CD4-positive, alpha-beta memory T cell (primary cell): ENCODE measurements at regions of chr16 and their contacts with region 1.

Region 1: GRCh38 chr16:3074860-3075522 is 9.6 kb downstream of the IL32 start:
- DNase-seq: peak; percentile 90 to 96 (median 91)
- H3K4me3 ChIP-seq: peak overlapping the region; percentile 4 to 29
- H3K4me3 Mint-ChIP-seq: peak overlapping the region; percentile 74 to 87 (median 83)
- H3K27ac ChIP-seq: peak overlapping the region; percentile 77
- H3K27ac Mint-ChIP-seq: peak overlapping the region; percentile 91 to 99 (median 97)
- H3K4me1 ChIP-seq: peaks cover 98% of the 10 kb centered on the region
- H3K4me1 Mint-ChIP-seq: peaks cover 69 to 98% (median 85%) of the 10 kb centered on the region in 4 donors
- H3K27me3 ChIP-seq: no peaks in the 10 kb centered on the region
- H3K27me3 Mint-ChIP-seq: no peaks in the 10 kb centered on the region

Region 2: GRCh38 chr16:2614761-2615191 is 460.2 kb before region 1 on chr16:
- CTCF ChIA-PET with region 1: no interaction called
- POLR2A ChIA-PET with region 1: no interaction called
- intact Hi-C with region 1: no loop called
- DNase-seq: no peak
- H3K4me3 ChIP-seq: no peak overlapping the region
- H3K4me3 Mint-ChIP-seq: no peak overlapping the region
- H3K27ac ChIP-seq: no peak overlapping the region
- H3K27ac Mint-ChIP-seq: peak overlapping the region in 2 of 7 donors; percentile 32 to 74
- H3K4me1 ChIP-seq: no peaks in the 10 kb centered on the region
- H3K4me1 Mint-ChIP-seq: peaks cover 0 to 4% (median 0%) of the 10 kb centered on the region in 4 donors
- H3K27me3 ChIP-seq: no peaks in the 10 kb centered on the region
- H3K27me3 Mint-ChIP-seq: no peaks in the 10 kb centered on the region

Region 3: GRCh38 chr16:3029537-3030402 is 45.2 kb before region 1 on chr16:
- CTCF ChIA-PET with region 1: interaction called, 14 read pairs
- POLR2A ChIA-PET with region 1: interaction called, 15 read pairs
- intact Hi-C with region 1: no loop called
- DNase-seq: peak in 3 of 5 donors; percentile 36 to 43 (median 37)
- H3K4me3 ChIP-seq: peak overlapping the region in 1 of 2 donors; percentile 41
- H3K4me3 Mint-ChIP-seq: peak overlapping the region; percentile 52 to 88 (median 74)
- H3K27ac ChIP-seq: no peak overlapping the region
- H3K27ac Mint-ChIP-seq: peak overlapping the region in 1 of 7 donors; percentile 81
- H3K4me1 ChIP-seq: peaks cover 25% of the 10 kb centered on the region
- H3K4me1 Mint-ChIP-seq: peaks cover 11 to 32% (median 19%) of the 10 kb centered on the region in 4 donors
- H3K27me3 ChIP-seq: peaks cover 13% of the 10 kb centered on the region
- H3K27me3 Mint-ChIP-seq: peaks cover 22 to 25% of the 10 kb centered on the region in 2 donors

Region 4: GRCh38 chr16:3087243-3088235 is 12.5 kb after region 1 on chr16:
- CTCF ChIA-PET with region 1: interaction called, 11 read pairs
- POLR2A ChIA-PET with region 1: interaction called, 75 read pairs
- intact Hi-C with region 1: no loop called
- DNase-seq: no peak
- H3K4me3 ChIP-seq: no peak overlapping the region
- H3K4me3 Mint-ChIP-seq: peak overlapping the region; percentile 10 to 83 (median 64)
- H3K27ac ChIP-seq: peak overlapping the region; percentile 10
- H3K27ac Mint-ChIP-seq: peak overlapping the region in 5 of 7 donors; percentile 72 to 85 (median 77)
- H3K4me1 ChIP-seq: peaks cover 39% of the 10 kb centered on the region
- H3K4me1 Mint-ChIP-seq: peaks cover 22 to 71% (median 38%) of the 10 kb centered on the region in 4 donors
- H3K27me3 ChIP-seq: no peaks in the 10 kb centered on the region
- H3K27me3 Mint-ChIP-seq: no peaks in the 10 kb centered on the region

Region 5: GRCh38 chr16:3099732-3100499 is 24.9 kb after region 1 on chr16:
- CTCF ChIA-PET with region 1: interaction called, 78 read pairs
- POLR2A ChIA-PET with region 1: interaction called, 116 read pairs
- intact Hi-C with region 1: no loop called
- DNase-seq: peak; percentile 80 to 89 (median 82)
- H3K4me3 ChIP-seq: peak overlapping the region; percentile 19 to 23
- H3K4me3 Mint-ChIP-seq: peak overlapping the region; percentile 77 to 90 (median 86)
- H3K27ac ChIP-seq: peak overlapping the region; percentile 33
- H3K27ac Mint-ChIP-seq: peak overlapping the region; percentile 82 to 97 (median 93)
- H3K4me1 ChIP-seq: peaks cover 58% of the 10 kb centered on the region
- H3K4me1 Mint-ChIP-seq: peaks cover 19 to 68% (median 44%) of the 10 kb centered on the region in 4 donors
- H3K27me3 ChIP-seq: no peaks in the 10 kb centered on the region
- H3K27me3 Mint-ChIP-seq: no peaks in the 10 kb centered on the region

Region 6: DNA sequence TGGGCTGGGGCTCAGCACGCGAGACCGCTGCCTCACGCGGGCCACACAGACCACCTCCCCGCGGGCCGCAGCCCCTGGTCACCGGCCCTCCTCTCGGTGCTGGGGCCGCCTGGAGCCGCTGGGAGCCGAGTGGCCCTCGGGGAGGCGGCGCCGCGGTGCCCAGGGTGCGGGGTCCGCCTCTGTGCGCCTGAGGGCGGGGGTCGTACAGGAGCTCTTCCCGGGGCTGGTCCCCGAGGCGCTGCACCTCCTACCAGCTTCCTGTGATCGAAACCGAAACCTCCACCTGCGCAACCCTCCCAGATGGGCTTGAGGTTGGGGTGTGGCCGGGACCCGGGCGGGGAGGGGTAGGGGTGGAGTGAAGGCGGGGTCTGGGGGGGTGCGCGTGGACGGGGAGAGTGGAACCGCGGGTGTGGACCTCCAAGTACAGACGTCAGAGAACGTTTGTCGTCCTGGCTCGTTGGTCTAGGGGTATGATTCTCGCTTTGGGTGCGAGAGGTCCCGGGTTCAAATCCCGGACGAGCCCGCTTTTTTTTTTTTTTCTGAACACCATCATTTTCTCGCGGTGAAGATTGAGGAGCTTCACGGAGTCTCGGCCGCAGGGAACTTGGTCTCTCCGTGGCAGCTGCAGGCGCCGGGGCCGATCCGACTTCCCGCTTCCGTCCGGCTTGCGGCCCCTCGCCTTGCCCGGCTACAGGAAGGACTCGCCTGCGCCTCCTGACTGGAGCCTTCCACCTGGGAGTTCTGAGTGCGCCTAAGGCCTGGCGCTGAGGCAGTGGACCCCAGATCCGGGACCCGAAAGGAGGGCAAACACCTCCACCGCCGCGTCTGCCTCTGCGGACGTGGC is 83.7 kb after region 1 on chr16:
- CTCF ChIA-PET with region 1: interaction called, 3 read pairs
- POLR2A ChIA-PET with region 1: interaction called, 12 read pairs
- intact Hi-C with region 1: no loop called
- DNase-seq: peak; percentile 92 to 98 (median 94)
- H3K4me3 ChIP-seq: peak overlapping the region; percentile 65 to 66
- H3K4me3 Mint-ChIP-seq: peak overlapping the region; percentile 83 to 96 (median 92)
- H3K27ac ChIP-seq: peak overlapping the region; percentile 62
- H3K27ac Mint-ChIP-seq: peak overlapping the region; percentile 92 to 100 (median 96)
- H3K4me1 ChIP-seq: peaks cover 25% of the 10 kb centered on the region
- H3K4me1 Mint-ChIP-seq: peaks cover 11 to 36% (median 25%) of the 10 kb centered on the region in 4 donors
- H3K27me3 ChIP-seq: no peaks in the 10 kb centered on the region
- H3K27me3 Mint-ChIP-seq: peaks cover 0 to 2% of the 10 kb centered on the region in 2 donors

Region 7: GRCh38 chr16:3754081-3754703 is 679.2 kb after region 1 on chr16:
- CTCF ChIA-PET with region 1: no interaction called
- POLR2A ChIA-PET with region 1: no interaction called
- intact Hi-C with region 1: no loop called
- DNase-seq: no peak
- H3K4me3 ChIP-seq: no peak overlapping the region
- H3K4me3 Mint-ChIP-seq: no peak overlapping the region
- H3K27ac ChIP-seq: no peak overlapping the region
- H3K27ac Mint-ChIP-seq: peak overlapping the region in 2 of 7 donors; percentile 19 to 57
- H3K4me1 ChIP-seq: peaks cover 5% of the 10 kb centered on the region
- H3K4me1 Mint-ChIP-seq: peaks cover 11 to 23% (median 18%) of the 10 kb centered on the region in 4 donors
- H3K27me3 ChIP-seq: no peaks in the 10 kb centered on the region
- H3K27me3 Mint-ChIP-seq: no peaks in the 10 kb centered on the region